ENCODE measurements at regions of chr17 and their contacts with region 1.

Region 1: DNA sequence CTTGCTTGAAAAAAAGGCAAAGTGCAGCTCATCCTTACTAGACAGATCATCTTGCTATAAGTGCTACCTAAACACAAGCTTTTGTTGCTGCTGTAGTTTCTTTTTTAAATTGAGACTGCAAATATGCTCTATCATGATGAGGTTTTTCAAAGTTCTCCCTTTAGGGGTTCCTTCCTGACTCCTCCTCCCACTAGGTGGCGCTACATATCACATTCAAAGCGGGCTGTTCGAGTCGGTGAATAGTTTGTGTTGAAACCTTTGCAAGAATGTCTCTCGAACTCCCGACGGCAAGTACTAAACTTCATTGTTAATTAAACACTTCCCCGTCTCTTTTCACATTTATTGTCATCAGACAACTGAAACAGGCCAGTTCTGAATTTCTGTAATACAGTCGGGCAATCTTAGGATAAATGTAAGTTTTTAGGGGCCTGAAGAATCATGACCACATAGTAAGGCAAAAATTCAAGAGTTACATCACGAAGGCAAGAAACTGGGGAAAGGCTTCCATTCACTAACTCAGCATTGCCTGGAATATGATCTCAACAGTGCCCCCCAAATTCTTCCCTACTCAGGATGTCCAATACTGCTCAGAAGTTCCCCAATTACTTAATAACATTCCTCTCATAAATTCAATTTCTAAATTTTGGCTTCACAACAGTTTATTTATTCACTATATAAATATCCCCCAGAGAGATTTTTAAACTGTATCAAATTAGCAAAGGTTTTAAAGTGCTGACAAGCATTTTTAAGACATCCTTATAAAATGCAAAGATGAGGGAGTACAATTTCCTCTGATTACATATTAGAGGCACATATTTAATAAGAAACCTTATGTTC is 6.7 kb downstream of the HS3ST3A1 start:
- DNase-seq: no peak

Region 2: DNA sequence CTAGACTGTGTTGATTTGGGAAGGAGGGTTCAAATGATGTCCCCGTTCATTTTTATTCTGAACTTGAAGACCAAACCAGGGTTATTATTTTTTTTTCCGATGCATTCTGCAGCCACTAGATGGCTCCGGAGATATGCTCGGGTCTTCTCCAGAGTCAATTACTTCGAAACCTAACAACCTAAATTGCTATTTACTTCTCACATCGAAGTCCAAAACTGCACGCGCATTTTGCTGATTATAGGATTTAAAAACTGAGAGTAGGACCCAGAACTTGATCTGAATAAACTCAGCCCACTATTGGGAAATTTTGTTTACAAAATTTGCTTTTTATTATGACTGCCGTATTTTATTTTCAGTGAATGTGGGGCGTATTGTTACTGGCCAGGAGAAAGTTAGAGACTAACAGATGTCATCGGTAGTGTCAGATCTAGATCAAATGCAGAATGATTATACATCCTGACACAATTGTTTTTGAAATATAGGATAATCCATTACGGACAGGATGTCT is 257.1 kb before region 1 on chr17:
- intact Hi-C with region 1: loop called (anchors 5 kb)
- DNase-seq: no peak

Region 3: GRCh38 chr17:13442361-13442760 is 152.6 kb before region 1 on chr17:
- intact Hi-C with region 1: no loop called
- DNase-seq: no peak

Region 4: DNA sequence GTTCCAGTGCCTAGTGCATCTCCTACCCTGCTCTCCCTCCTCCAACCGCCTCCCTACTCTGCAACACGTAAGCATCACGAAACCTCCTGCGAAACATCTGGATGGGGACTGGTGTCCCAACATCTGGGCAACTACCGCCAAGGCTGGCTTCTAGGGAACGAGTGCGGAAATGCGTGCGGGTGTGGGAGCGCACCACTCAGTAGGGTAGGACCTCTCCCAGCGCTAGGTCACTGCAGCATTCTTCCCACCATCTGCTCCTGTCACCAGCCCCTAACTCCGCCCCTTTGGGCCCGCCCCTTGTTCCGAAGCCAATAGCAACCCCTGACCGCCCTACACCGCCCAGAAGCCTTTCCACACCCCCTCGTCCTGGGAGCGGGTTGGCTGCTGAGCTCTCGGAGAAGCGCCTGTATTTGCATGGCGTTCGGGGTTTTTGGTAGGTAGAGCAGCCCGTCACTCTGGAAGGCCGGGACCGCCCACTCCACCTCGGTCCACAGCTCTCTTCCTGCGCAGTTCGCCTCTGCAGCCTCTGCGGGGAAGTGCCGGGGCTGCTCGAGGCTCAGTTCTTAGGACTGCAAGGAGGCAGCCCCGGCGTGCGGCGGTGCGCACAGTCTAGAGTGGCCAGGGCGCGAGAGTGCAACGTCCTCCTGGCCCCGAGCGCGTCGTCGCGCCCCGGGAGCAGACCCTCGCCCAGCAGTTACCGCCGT is 705.7 kb after region 1 on chr17 and contains the start of gene HS3ST3B1:
- intact Hi-C with region 1: loop called (anchors 2 kb)
- DNase-seq: peak; percentile 99
- total RNA-seq, gene HS3ST3B1: 2.6 TPM

Region 5: DNA sequence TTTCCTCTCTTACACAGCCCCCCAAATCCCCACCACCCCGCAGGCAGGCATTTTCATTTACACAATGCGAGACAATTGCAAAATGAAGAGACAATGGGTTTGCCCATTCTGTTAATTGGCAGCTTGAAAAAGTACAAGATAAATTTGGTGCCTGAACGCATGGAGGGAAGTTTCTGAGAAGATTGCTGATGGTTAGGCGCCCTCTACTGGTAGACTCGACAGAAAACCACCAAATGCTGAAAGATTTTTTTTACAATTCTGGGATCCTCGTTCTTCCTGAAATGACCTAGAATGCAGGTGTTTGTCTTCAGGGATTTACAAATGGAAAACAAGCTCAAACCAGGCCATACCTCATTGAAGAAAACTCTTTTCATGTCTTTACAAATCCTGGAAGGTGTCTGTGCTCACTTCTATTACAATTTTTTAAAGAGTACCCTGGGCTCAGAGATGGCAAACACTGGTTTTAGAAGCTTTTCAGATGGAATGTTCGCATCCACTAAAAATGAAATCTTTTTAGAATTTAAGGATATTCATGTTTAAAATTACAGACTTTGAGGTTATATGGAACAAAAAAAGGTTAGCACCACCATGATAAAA is 1331.6 kb after region 1 on chr17:
- intact Hi-C with region 1: loop called (anchors 5 kb)
- DNase-seq: no peak

Region 6: DNA sequence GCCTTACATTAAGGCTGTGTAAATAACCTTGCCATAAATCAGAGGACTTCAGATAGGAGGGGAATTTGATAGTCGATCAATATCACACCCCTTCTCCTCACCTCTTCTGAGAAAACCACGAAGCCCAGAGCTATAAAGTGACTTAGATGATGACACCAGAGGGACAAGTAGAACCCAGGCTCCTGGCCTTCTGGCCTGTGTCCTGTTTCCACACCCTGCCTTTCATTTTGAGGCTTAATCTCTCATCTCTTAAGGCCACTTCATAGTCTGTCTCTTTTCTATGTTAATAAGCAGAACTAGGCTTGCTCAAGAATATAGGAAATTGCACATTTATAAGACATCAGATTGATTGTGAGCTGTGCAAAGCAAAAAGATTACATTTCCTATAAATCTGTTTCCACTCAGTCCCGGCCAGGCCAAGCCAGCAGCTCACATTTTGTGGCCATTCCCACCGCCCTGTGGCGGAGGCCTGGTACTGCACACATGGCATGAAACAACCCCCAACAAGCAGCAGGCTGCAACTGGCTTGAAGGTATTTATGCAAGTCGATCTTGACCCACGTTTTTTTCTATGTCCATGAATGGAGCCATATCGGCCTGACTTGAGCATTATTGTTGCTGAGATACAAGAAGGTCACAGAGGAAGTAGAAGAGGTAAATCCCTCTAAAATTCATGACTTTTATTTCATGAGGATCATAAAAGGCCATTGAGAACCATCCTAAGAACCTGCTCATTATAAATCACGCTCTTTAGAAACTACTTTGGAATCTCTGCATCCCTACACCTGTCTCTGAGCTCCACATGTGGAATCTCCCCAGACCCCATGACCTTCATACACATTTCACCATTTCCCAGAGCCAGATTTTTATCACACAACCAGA is 1576.4 kb after region 1 on chr17:
- intact Hi-C with region 1: loop called (anchors 10 kb)
- DNase-seq: peak; percentile 76